A673 (cell line): ENCODE measurements at regions of chr1 and their contacts with region 1.

Region 1: GRCh38 chr1:168163670-168164069 is 15.1 kb upstream of the TIPRL start:
- DNase-seq: no peak
- H3K4me3 ChIP-seq: no peak overlapping the region
- H3K27ac ChIP-seq: no peak overlapping the region
- H3K4me1 ChIP-seq: no peaks in the 10 kb centered on the region
- H3K27me3 ChIP-seq: no peaks in the 10 kb centered on the region
- CTCF ChIP-seq: no peak

Region 2: GRCh38 chr1:167526667-167527383 is 636.8 kb before region 1 on chr1:
- CTCF ChIA-PET with region 1: no interaction called
- POLR2A ChIA-PET with region 1: interaction called, 20 read pairs
- intact Hi-C with region 1: no loop called
- DNase-seq: no peak
- H3K4me3 ChIP-seq: no peak overlapping the region
- H3K27ac ChIP-seq: no peak overlapping the region
- H3K4me1 ChIP-seq: no peaks in the 10 kb centered on the region
- H3K27me3 ChIP-seq: no peaks in the 10 kb centered on the region
- CTCF ChIP-seq: no peak

Region 3: DNA sequence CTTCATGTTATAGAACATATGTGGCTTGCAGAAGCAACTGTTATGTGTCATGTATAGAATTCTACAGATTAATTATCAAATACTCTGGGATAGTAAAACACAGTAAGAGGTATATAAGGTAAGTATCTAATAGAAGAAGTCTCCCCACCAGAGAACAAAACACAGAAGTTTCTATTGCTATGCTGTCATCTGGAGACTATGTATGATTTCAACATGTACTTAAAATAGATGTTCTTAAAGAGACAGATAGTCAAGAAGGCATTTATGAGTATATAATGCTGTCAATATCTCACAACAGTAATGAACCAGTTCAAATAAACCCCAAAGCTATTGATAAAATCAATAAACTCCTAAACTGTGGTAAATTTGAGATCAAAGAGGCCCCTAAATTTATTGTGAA is 241.6 kb before region 1 on chr1:
- CTCF ChIA-PET with region 1: no interaction called
- POLR2A ChIA-PET with region 1: no interaction called
- intact Hi-C with region 1: no loop called
- DNase-seq: no peak
- H3K4me3 ChIP-seq: no peak overlapping the region
- H3K27ac ChIP-seq: no peak overlapping the region
- H3K4me1 ChIP-seq: peaks cover 3% of the 10 kb centered on the region
- H3K27me3 ChIP-seq: no peaks in the 10 kb centered on the region
- CTCF ChIP-seq: no peak

Region 4: DNA sequence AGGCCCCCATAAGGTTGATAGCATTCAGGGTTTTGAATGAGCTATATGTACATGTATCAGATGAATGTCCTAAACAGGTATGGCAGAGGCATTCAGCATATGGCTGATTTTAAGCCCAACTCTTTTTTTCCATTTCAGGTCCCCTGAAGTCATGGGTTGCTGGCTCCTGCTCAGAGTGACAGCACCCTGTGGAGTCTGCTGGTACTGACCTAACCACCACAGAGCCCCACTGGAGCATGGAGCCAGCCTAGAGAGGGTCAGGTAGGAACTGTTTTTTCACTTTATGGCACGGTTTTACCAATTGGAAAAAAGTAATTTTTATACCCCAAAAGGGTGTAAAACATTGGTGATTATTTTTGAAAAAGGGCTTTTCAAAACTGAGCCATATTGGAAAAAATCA is 144.3 kb before region 1 on chr1:
- CTCF ChIA-PET with region 1: no interaction called
- POLR2A ChIA-PET with region 1: no interaction called
- intact Hi-C with region 1: no loop called
- DNase-seq: no peak
- H3K4me3 ChIP-seq: no peak overlapping the region
- H3K27ac ChIP-seq: no peak overlapping the region
- H3K4me1 ChIP-seq: no peaks in the 10 kb centered on the region
- H3K27me3 ChIP-seq: no peaks in the 10 kb centered on the region
- CTCF ChIP-seq: no peak